ENCODE measurements at regions of chr3 and their contacts with region 1.

Region 1: GRCh38 chr3:23590424-23591273 is 215.1 kb upstream of the UBE2E1 start:
- DNase-seq: no peak
- H3K4me3 Mint-ChIP-seq: no peak overlapping the region
- H3K27ac Mint-ChIP-seq: no peak overlapping the region
- H3K4me1 Mint-ChIP-seq: no peaks in the 10 kb centered on the region
- H3K27me3 Mint-ChIP-seq: no peaks in the 10 kb centered on the region
- CTCF ChIP-seq: no peak

Region 2: GRCh38 chr3:23174426-23175039 is 416.1 kb before region 1 on chr3:
- CTCF ChIA-PET with region 1: no interaction called
- POLR2A ChIA-PET with region 1: no interaction called
- intact Hi-C with region 1: no loop called
- DNase-seq: no peak
- H3K4me3 Mint-ChIP-seq: no peak overlapping the region
- H3K27ac Mint-ChIP-seq: no peak overlapping the region
- H3K4me1 Mint-ChIP-seq: no peaks in the 10 kb centered on the region
- H3K27me3 Mint-ChIP-seq: no peaks in the 10 kb centered on the region
- CTCF ChIP-seq: no peak

Region 3: GRCh38 chr3:23461069-23461468 is 129.6 kb before region 1 on chr3:
- CTCF ChIA-PET with region 1: no interaction called
- POLR2A ChIA-PET with region 1: no interaction called
- intact Hi-C with region 1: loop called (anchors 10 kb)
- DNase-seq: no peak
- H3K4me3 Mint-ChIP-seq: no peak overlapping the region
- H3K27ac Mint-ChIP-seq: no peak overlapping the region
- H3K4me1 Mint-ChIP-seq: peaks cover 11% of the 10 kb centered on the region
- H3K27me3 Mint-ChIP-seq: no peaks in the 10 kb centered on the region
- CTCF ChIP-seq: no peak